ENCODE measurements at regions of chr16 and their contacts with region 1.

Region 1: DNA sequence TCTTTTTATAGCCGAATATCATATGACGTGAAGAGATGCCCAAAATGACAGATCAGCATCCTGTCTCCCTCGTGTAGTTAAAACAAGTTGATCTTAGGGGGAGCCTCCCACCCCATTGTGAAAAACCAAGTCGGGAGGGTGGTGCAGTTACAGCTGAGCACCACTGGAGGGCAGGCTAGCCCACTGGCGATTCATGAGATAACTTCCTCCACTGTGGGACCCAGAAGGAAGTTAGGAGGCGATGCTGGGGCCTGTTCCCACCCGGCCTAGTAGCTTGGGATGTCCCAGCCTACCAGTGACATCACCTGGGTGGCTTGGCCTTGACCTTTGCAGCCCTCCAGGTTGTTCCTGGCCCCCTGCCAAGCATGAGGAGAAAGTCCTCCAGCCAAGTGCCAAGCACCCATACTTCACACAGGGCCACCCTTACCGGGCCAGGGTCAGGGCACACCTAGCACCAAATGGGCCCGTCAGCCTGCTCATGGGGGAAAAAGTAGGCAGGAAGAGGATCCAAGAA is 8.1 kb upstream of the CPNE2 start:
- DNase-seq: peak; percentile 91
- H3K4me3 ChIP-seq: peak overlapping the region in 1 of 8 donors; percentile 8
- H3K27ac ChIP-seq: peak overlapping the region in 7 of 8 donors; percentile 53 to 86 (median 76)
- H3K4me1 ChIP-seq: peaks cover 0 to 31% (median 20%) of the 10 kb centered on the region in 6 donors
- H3K27me3 ChIP-seq: no peaks in the 10 kb centered on the region
- CTCF ChIP-seq: peak; percentile 90 to 99 (median 97)
- POLR2A ChIP-seq: no peak

Region 2: GRCh38 chr16:57167953-57168352 is 83.6 kb after region 1 on chr16:
- intact Hi-C with region 1: loop called (anchors 10 kb)
- DNase-seq: no peak
- H3K4me3 ChIP-seq: no peak overlapping the region
- H3K27ac ChIP-seq: peak overlapping the region in 3 of 8 donors; percentile 47 to 75 (median 69)
- H3K4me1 ChIP-seq: peaks cover 0 to 32% (median 24%) of the 10 kb centered on the region in 6 donors
- H3K27me3 ChIP-seq: no peaks in the 10 kb centered on the region
- CTCF ChIP-seq: peak; percentile 27 to 80 (median 56)
- POLR2A ChIP-seq: no peak